Heart left ventricle (tissue), 16 donors: ENCODE measurements at regions of chr17 and their contacts with region 1.

Region 1: GRCh38 chr17:43878260-43879175 is 28.8 kb downstream of the MPP2 start:
- DNase-seq: peak; percentile 58 to 87 (median 68)
- ATAC-seq: peak; percentile 24 to 79 (median 74)
- H3K4me3 ChIP-seq: no peak overlapping the region
- H3K27ac ChIP-seq: peak overlapping the region in 3 of 12 donors; percentile 7 to 13 (median 12)
- H3K4me1 ChIP-seq: peaks cover 0 to 29% (median 7%) of the 10 kb centered on the region in 12 donors
- H3K27me3 ChIP-seq: no peaks in the 10 kb centered on the region
- CTCF ChIP-seq: peak in 11 of 12 donors; percentile 91 to 97 (median 95)
- POLR2A ChIP-seq: no peak

Region 2: DNA sequence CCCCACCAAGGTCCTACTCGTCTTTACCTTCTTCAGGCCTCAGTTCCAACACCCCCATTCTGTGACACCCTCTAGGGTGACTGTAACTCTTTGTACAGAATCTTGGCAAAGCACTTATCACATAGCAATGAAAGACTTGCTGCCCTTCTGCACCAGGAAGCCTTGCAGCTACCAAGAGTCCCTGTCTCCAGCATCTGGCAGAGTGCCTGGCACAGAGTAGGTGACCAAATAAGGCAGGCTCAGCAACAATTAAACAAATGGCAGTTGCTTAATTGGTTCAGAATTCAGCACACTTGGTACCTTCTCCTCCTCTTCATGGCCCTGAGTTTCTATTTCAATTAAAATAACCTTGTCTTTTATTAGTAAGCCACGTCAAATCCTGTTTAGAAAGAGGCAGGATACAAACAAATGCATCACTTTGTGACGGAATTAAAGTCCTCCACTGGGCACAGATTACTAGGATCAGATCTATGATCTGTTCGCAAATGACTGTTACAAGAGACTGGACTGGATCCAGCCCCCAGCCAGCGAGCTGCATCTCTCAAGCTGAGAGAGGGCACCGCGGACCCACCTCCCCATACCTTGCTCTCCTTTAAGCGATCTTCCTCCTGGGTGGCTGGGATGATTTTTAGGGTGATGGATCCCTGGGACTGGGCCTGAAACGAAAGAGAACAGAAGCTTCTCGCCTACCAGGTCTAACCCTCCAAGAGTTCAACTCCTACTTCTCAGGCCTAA is 55.0 kb before region 1 on chr17:
- intact Hi-C with region 1: loop called in 1 of 10 experiments (anchors 10 kb)
- DNase-seq: peak; percentile 70 to 91 (median 79)
- ATAC-seq: peak; percentile 79 to 84 (median 83)
- H3K4me3 ChIP-seq: no peak overlapping the region
- H3K27ac ChIP-seq: peak overlapping the region; percentile 47 to 93 (median 78)
- H3K4me1 ChIP-seq: peaks cover 0 to 58% (median 12%) of the 10 kb centered on the region in 12 donors
- H3K27me3 ChIP-seq: no peaks in the 10 kb centered on the region
- CTCF ChIP-seq: no peak
- POLR2A ChIP-seq: no peak

Region 3: GRCh38 chr17:43857942-43858600 is 20.4 kb before region 1 on chr17:
- intact Hi-C with region 1: no loop called
- DNase-seq: peak in 2 of 5 donors; percentile 40 to 47
- ATAC-seq: peak in 2 of 4 donors; percentile 4 to 33
- H3K4me3 ChIP-seq: no peak overlapping the region
- H3K27ac ChIP-seq: peak overlapping the region; percentile 18 to 88 (median 75)
- H3K4me1 ChIP-seq: peaks cover 6 to 60% (median 32%) of the 10 kb centered on the region in 12 donors
- H3K27me3 ChIP-seq: peaks cover 0 to 7% (median 0%) of the 10 kb centered on the region in 9 donors
- CTCF ChIP-seq: no peak
- POLR2A ChIP-seq: no peak

Region 4: DNA sequence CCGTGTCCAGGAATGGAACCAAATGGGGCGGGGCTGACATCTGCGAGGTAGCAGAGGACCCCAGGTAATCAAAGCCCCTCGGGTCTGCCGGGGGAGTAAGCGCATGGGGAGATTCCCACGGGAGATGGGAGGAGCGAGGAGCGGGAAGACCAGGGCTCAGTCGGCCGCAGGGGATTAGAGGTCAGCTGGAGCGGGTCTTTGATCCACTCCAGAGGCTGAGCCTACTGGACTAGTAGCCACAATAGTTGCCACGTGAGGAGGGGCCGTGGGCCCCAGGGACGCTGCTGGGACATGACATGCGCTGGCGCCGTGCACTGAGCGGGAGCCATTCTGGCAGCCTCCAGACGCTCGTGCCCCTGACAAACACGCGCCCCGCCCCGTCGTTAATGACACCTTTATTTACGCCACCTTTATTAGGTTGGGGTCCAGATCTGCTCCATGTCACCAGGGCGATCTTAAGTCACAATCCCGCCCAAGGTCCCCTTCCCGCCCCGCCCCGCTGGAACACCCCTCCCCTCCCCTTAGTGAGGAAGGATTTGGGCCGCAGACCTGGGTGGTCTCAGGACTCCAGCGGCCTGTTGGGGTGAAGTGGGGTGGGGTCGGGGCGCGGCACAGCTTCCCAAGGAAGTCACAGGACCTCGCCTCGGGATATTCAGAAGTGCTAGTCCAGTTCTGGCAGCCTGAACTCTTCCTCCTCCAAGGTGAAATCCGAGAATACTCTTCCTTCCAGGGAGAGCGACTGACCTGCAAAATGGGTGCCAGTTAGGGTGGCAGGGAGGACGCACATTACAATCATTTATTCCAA is 48.7 kb after region 1 on chr17:
- intact Hi-C with region 1: no loop called
- DNase-seq: peak in 2 of 5 donors; percentile 50 to 56
- ATAC-seq: peak in 3 of 4 donors; percentile 36 to 64 (median 53)
- H3K4me3 ChIP-seq: peak overlapping the region in 11 of 12 donors; percentile 26 to 57 (median 46)
- H3K27ac ChIP-seq: peak overlapping the region in 2 of 12 donors; percentile 19 to 40
- H3K4me1 ChIP-seq: peaks cover 0 to 15% (median 7%) of the 10 kb centered on the region in 12 donors
- H3K27me3 ChIP-seq: peaks cover 0 to 25% (median 0%) of the 10 kb centered on the region in 9 donors
- CTCF ChIP-seq: no peak
- POLR2A ChIP-seq: no peak

Region 5: GRCh38 chr17:44006598-44007345 is 128.3 kb after region 1 on chr17:
- intact Hi-C with region 1: loop called in 1 of 10 experiments (anchors 10 kb)
- DNase-seq: peak; percentile 96 to 99 (median 98)
- ATAC-seq: peak; percentile 87 to 94 (median 92)
- H3K4me3 ChIP-seq: peak overlapping the region; percentile 44 to 79 (median 67)
- H3K27ac ChIP-seq: peak overlapping the region in 7 of 12 donors; percentile 6 to 66 (median 42)
- H3K4me1 ChIP-seq: peaks cover 8 to 52% (median 33%) of the 10 kb centered on the region in 12 donors
- H3K27me3 ChIP-seq: peaks cover 13 to 30% (median 22%) of the 10 kb centered on the region in 9 donors
- CTCF ChIP-seq: peak in 11 of 12 donors; percentile 36 to 65 (median 55)
- POLR2A ChIP-seq: peak in 1 of 2 donors; percentile 30